Activated CD8-positive, alpha-beta memory T cell treated with anti-CD3 and anti-CD28 coated beads, Interleukin-2, amount 10 ng/mL, durations not matched to agents 7 days and 5 days (primary cell): ENCODE measurements at regions of chr12 and their contacts with region 1.

Region 1: DNA sequence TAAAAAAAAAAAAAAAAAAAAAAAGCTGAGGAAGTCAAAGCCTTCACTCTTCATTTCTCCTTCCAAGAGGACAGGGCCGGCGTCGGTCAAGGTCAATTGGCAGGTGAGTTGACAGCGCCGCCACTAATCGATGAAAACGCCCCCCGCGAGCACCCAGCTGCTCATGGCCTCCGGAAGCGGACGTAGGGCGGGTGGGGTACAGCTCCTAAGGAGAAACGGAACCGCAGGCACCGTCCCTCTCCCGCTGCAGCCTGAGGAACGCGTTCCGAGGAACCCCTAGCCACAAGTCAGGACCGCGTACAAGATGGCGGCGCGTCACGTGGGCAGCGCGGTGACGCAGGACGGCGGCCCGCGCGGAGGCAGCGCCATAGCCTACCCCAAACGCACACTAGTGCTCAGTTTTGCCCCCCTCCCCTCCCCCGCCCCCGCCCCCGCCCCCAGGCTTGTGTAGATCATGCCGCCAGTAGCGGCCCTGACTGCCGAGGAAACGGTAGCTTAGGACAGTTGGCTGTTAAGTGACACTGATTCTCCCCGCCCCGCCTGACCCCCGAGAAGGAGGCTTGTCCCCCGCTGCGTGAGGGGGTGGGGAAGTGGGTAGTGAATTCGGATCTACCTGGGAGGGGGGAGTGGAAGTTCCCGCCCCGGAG is at the start of gene ATF1:
- DNase-seq: peak; percentile 93
- ATAC-seq: peak; percentile 84
- H3K4me3 Mint-ChIP-seq: peak within 1 kb of the TSS; percentile 85
- H3K27ac Mint-ChIP-seq: peak within 1 kb of the TSS; percentile 95
- H3K4me1 Mint-ChIP-seq: peaks cover 32% of the 10 kb centered on the region
- H3K27me3 Mint-ChIP-seq: no peaks in the 10 kb centered on the region
- total RNA-seq, gene ATF1: 29.4 to 44.0 TPM

Region 2: DNA sequence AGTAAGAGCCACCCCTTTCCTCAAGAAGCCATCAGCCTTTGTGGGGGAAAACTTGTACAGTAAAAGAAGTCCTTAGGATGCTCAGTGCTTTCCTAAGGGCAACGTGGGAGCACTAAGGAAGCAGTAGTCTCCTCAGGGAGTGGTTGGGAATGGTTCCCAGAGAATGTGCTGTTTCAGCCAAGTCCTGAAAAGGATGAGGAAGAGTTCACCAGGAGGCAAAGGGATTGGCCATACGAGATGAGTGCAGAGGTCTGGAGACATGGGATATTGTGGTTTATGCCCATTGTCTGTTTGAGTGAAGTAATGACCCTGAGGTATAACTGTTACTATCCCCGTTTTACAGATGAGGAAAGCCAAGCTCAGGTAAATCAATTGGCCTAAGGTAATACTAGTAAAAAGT is 85.9 kb before region 1 on chr12:
- CTCF ChIA-PET with region 1: no interaction called
- DNase-seq: no peak
- ATAC-seq: no peak
- H3K4me3 Mint-ChIP-seq: no peak overlapping the region
- H3K27ac Mint-ChIP-seq: no peak overlapping the region
- H3K4me1 Mint-ChIP-seq: peaks cover 2% of the 10 kb centered on the region
- H3K27me3 Mint-ChIP-seq: no peaks in the 10 kb centered on the region

Region 3: GRCh38 chr12:50695961-50696360 is 67.8 kb before region 1 on chr12:
- CTCF ChIA-PET with region 1: no interaction called
- DNase-seq: no peak
- ATAC-seq: no peak
- H3K4me3 Mint-ChIP-seq: no peak overlapping the region
- H3K27ac Mint-ChIP-seq: no peak overlapping the region
- H3K4me1 Mint-ChIP-seq: no peaks in the 10 kb centered on the region
- H3K27me3 Mint-ChIP-seq: no peaks in the 10 kb centered on the region

Region 4: GRCh38 chr12:50708631-50709030 is 55.1 kb before region 1 on chr12:
- CTCF ChIA-PET with region 1: no interaction called
- DNase-seq: no peak
- ATAC-seq: no peak
- H3K4me3 Mint-ChIP-seq: no peak overlapping the region
- H3K27ac Mint-ChIP-seq: no peak overlapping the region
- H3K4me1 Mint-ChIP-seq: no peaks in the 10 kb centered on the region
- H3K27me3 Mint-ChIP-seq: no peaks in the 10 kb centered on the region

Region 5: GRCh38 chr12:50725011-50725942 is 38.5 kb before region 1 on chr12:
- CTCF ChIA-PET with region 1: no interaction called
- DNase-seq: no peak
- ATAC-seq: no peak
- H3K4me3 Mint-ChIP-seq: no peak overlapping the region
- H3K27ac Mint-ChIP-seq: no peak overlapping the region
- H3K4me1 Mint-ChIP-seq: peaks cover 8% of the 10 kb centered on the region
- H3K27me3 Mint-ChIP-seq: no peaks in the 10 kb centered on the region

Region 6: DNA sequence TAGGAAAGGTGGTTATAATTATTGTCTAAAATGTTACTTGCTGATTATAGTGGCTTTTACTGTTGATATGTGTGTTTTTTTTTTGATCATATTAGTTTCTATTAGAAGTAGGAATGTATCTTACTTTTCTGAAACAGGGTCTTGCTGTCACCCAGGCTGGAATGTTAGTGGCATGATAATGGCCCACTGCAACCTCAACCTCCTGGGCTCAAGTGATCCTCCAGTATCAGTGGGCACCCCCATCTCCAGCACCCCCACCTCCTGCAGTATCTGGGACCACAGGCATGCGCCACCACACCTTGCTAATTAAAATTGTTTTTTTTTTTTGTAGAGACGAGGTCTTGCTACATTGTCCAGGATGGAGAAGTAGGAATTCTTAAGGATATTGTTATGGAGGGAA is 11.5 kb after region 1 on chr12:
- CTCF ChIA-PET with region 1: interaction called, 13 read pairs
- DNase-seq: no peak
- ATAC-seq: no peak
- H3K4me3 Mint-ChIP-seq: no peak overlapping the region
- H3K27ac Mint-ChIP-seq: no peak overlapping the region
- H3K4me1 Mint-ChIP-seq: peaks cover 5% of the 10 kb centered on the region
- H3K27me3 Mint-ChIP-seq: no peaks in the 10 kb centered on the region

Region 7: GRCh38 chr12:50825372-50825838 is 61.6 kb after region 1 on chr12:
- CTCF ChIA-PET with region 1: interaction called, 14 read pairs
- DNase-seq: no peak
- ATAC-seq: peak; percentile 69
- H3K4me3 Mint-ChIP-seq: no peak overlapping the region
- H3K27ac Mint-ChIP-seq: peak overlapping the region; percentile 38
- H3K4me1 Mint-ChIP-seq: peaks cover 4% of the 10 kb centered on the region
- H3K27me3 Mint-ChIP-seq: no peaks in the 10 kb centered on the region

Region 8: DNA sequence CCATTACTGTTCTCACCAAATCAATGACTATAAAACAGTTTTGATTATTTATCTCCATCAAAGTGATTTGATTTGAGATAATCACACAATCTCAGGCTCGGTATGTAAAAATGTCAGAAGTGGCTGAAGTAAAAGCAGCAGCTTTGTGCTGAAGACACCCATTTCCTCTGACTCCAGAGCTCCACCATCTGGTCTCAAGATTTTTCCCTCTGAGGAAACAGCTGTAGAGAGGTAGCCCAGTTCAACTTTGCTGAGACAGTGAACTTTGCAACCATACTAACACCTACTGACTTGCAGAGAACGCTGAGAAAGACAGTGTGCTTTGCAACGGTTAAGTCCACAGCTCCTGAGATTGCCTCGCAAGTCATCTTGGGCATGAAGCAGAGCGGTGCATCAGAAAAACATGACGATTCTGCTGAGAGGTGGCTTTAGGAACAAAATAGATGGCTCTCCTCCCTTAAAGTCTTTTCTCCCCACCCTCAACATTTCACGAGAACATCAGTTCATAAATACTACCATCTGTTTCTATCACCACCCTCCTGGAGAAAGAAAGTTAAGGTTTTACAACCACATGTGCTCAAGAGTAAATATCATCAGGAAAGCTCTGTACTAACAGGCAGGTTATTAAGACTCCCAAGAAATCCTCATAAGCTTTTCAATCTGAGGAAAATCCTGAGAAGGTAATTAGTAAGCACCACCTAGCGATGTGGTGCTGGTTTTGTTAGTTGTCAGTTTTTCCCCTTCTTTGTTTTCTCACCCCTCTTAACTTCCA is 223.4 kb after region 1 on chr12:
- CTCF ChIA-PET with region 1: interaction called, 29 read pairs
- DNase-seq: peak; percentile 45
- ATAC-seq: peak; percentile 51
- H3K4me3 Mint-ChIP-seq: no peak overlapping the region
- H3K27ac Mint-ChIP-seq: no peak overlapping the region
- H3K4me1 Mint-ChIP-seq: peaks cover 14% of the 10 kb centered on the region
- H3K27me3 Mint-ChIP-seq: no peaks in the 10 kb centered on the region

Region 9: GRCh38 chr12:51025836-51026638 is 262.3 kb after region 1 on chr12 and contains the start of gene SLC11A2:
- CTCF ChIA-PET with region 1: interaction called, 46 read pairs
- DNase-seq: peak; percentile 95
- ATAC-seq: peak; percentile 96
- H3K4me3 Mint-ChIP-seq: peak within 1 kb of the TSS; percentile 87
- H3K27ac Mint-ChIP-seq: peak within 1 kb of the TSS; percentile 90
- H3K4me1 Mint-ChIP-seq: peaks cover 44% of the 10 kb centered on the region
- H3K27me3 Mint-ChIP-seq: peaks cover 6% of the 10 kb centered on the region
- total RNA-seq, gene SLC11A2: 38.2 to 42.3 TPM